T-cell (primary cell): ENCODE measurements at regions of chr1 and their contacts with region 1.

Region 1: DNA sequence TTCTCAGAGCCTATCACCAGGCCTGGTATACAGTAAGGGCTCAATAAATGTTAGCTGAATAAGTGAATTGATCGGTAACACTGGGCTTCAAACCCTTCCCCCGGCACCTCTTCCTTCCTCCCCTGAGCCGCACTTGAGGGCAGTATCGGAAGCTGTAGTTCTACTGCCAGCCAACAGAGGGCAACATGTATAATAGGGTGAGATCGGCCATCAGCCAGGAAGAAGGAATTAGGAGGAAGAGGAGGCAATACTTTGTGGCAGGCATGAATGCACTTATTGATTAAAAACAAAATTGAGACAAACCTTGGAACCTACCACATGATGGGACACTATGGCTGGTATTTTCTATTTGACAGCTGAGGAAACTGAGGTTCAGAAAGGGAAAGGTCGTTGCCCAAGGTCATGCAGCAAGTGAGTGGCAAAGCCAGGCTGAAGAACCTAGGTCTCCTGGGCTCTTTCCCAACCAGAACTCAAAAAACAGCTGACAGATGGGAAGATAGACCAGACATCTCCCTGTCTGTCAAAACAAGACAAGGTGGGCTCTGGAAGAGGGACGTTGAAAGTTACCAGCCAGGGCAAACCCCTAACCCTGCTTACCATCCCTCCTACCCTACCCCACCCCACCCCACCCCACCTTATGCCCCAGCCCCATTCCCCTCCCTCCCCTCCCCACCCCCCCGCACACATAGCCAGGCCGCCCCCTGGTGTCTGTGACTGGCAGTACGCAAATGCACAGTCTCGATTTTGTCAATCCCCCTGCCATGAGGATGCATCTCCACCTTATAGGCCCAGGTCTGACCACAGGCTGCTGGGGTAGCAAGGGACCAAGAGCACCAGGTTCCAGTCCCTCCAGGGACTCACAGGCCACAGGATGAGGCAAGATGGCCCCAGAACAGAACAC is 107.3 kb upstream of the RUNX3 start:
- DNase-seq: peak in 33 of 35 experiments; percentile 32 to 81 (median 58)
- ATAC-seq: peak; percentile 59 to 73 (median 64)
- H3K4me3 ChIP-seq: no peak overlapping the region
- H3K4me3 Mint-ChIP-seq: peak overlapping the region in 1 of 3 donors; percentile 21
- H3K27ac ChIP-seq: peak overlapping the region; percentile 28
- H3K27ac Mint-ChIP-seq: no peak overlapping the region
- H3K4me1 ChIP-seq: peaks cover 24 to 74% of the 10 kb centered on the region in 2 experiments
- H3K4me1 Mint-ChIP-seq: peaks cover 39 to 40% (median 40%) of the 10 kb centered on the region in 3 donors
- H3K27me3 ChIP-seq: peaks cover 0 to 4% of the 10 kb centered on the region in 2 experiments
- H3K27me3 Mint-ChIP-seq: no peaks in the 10 kb centered on the region

Region 2: DNA sequence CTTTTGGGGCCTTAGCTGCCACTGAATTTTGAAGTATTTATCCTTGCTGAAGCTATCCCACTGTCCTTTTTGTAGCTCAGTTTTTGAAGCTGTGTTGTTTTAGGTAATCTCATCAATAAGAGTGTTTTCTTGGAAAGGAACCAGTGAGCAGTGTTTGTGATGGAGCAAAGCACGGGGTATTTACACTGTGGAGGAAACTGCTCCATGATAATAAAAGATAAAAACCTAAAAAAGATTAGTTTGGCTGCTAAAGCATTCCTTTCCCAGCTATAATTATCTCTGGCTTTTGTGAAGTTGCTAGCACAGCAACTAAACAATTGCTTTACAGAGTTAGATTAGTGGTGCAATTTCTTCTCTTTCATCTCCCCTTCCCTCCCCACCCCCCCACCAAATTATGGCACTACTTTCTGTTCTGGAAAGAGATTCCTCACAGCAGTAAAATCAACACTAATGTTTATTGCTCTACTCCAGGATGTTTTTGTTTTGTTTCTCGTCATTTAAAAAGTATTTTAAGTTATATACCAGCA is 372.9 kb before region 1 on chr1:
- CTCF ChIA-PET with region 1: no interaction called
- POLR2A ChIA-PET with region 1: no interaction called
- DNase-seq: no peak
- ATAC-seq: no peak
- H3K4me3 ChIP-seq: no peak overlapping the region
- H3K4me3 Mint-ChIP-seq: no peak overlapping the region
- H3K27ac ChIP-seq: no peak overlapping the region
- H3K27ac Mint-ChIP-seq: no peak overlapping the region
- H3K4me1 ChIP-seq: no peaks in the 10 kb centered on the region
- H3K4me1 Mint-ChIP-seq: peaks cover 5 to 6% (median 6%) of the 10 kb centered on the region in 3 donors
- H3K27me3 ChIP-seq: no peaks in the 10 kb centered on the region
- H3K27me3 Mint-ChIP-seq: no peaks in the 10 kb centered on the region

Region 3: DNA sequence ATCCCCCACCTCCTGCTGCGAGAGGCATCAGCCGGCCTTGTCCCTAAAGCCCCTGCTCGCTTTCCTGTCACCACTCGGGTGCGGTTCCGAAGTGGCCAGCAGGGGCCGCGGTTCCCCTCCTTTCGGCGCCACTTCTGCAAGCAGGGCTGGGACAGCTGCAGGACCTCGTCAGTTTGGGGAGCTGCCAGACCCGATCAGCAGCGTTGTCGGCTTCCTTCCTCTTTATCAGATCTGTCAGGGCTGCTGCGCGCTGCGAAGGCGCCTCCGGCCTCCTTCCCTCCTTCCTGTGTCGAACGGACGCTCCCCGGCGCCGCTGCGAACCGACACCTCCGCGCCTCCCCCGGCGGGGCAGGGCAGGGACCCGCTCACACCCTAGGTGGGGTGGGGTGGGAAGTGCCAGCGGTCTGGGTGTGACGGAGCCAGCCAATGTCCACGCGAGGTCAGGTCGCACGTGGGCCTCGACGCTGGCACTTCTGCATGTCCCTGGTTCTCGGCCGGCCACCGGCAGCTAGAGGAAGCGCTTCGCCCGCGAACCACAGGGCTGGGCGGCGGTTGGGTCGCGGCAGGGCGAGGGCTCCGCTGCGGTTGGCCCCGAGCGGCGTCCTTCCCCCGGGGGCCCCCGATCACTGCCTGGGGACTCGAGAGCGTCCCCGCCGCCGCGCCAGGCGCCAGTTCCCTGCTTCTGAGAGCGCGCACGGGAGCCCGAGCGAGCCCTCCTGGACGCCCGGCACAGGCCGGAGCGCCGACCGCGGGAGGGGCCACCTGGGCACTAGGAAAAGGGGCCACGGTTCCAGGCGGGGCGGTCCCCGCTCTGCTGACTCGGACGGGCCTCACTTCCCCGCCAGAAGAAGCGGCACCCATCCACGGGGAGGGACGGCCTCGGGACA is 189.2 kb before region 1 on chr1:
- CTCF ChIA-PET with region 1: interaction called in 1 of 2 experiments, 24 read pairs
- POLR2A ChIA-PET with region 1: no interaction called
- DNase-seq: peak; percentile 79 to 94 (median 86)
- ATAC-seq: peak; percentile 94 to 97 (median 96)
- H3K4me3 ChIP-seq: peak overlapping the region; percentile 49 to 51
- H3K4me3 Mint-ChIP-seq: peak overlapping the region; percentile 57 to 74 (median 71)
- H3K27ac ChIP-seq: peak overlapping the region; percentile 65
- H3K27ac Mint-ChIP-seq: peak overlapping the region; percentile 58 to 74
- H3K4me1 ChIP-seq: peaks cover 2 to 28% of the 10 kb centered on the region in 2 experiments
- H3K4me1 Mint-ChIP-seq: peaks cover 14 to 18% (median 18%) of the 10 kb centered on the region in 3 donors
- H3K27me3 ChIP-seq: no peaks in the 10 kb centered on the region
- H3K27me3 Mint-ChIP-seq: no peaks in the 10 kb centered on the region

Region 4: GRCh38 chr1:24930204-24931145 is 106.9 kb before region 1 on chr1 and contains the start of gene RUNX3:
- CTCF ChIA-PET with region 1: interaction called, 5 to 13 read pairs
- POLR2A ChIA-PET with region 1: interaction called, 3 read pairs
- DNase-seq: peak; percentile 85 to 96 (median 92)
- ATAC-seq: peak; percentile 80 to 87 (median 82)
- H3K4me3 ChIP-seq: peak within 1 kb of the TSS; percentile 87 to 97
- H3K4me3 Mint-ChIP-seq: peak within 1 kb of the TSS; percentile 96 to 98 (median 98)
- H3K27ac ChIP-seq: peak within 1 kb of the TSS; percentile 96
- H3K27ac Mint-ChIP-seq: peak within 1 kb of the TSS; percentile 89 to 96
- H3K4me1 ChIP-seq: peaks cover 32 to 72% of the 10 kb centered on the region in 2 experiments
- H3K4me1 Mint-ChIP-seq: peaks cover 44 to 63% (median 62%) of the 10 kb centered on the region in 3 donors
- H3K27me3 ChIP-seq: peaks cover 0 to 5% of the 10 kb centered on the region in 2 experiments
- H3K27me3 Mint-ChIP-seq: no peaks in the 10 kb centered on the region
- total RNA-seq, gene RUNX3: 140 to 220 (median 145) TPM

Region 5: DNA sequence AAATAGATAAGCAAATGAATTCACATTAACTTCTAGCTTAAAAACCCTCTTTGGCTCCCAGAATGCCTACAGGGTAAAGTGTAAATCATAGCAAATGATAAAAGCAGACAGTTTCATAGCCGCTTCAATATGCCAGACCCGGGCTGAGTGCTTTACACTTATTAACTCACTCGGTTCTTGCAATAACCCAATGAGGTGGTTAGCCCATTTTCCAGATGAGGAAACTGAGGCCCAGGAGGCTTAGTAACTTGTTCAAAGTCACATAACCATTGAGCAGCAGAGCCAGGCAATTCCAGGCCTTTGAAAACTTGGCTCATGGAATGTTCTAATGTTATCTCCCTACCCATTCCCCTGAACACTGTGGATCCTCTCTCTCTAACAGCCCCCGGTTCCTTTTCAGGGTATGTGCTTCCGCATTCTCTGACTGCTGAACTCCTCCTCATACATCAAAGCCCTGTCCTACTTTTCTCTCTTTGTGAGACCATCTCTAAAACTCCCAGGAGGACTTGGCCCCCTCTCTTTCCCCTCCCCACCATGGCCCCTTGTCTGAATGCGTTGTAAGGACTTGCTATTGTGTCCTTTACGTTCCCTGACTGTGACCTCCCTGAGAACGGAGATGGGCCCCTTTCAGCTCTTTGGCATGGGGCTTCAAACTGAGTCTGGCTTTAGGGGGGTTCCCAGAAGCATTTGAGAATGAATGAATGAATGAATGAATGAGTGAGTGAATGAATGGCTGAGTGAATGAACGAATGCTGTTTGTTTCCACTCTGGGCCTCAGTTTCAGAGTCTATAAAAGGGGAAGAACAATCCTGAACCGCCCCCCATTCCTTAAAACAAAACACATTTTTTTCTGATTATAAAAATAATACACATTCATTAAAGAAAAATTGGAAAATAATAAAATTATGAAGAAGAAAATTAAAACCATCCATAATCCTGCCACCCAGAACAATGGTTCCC is 91.8 kb before region 1 on chr1:
- CTCF ChIA-PET with region 1: no interaction called
- POLR2A ChIA-PET with region 1: no interaction called
- DNase-seq: no peak
- ATAC-seq: no peak
- H3K4me3 ChIP-seq: no peak overlapping the region
- H3K4me3 Mint-ChIP-seq: no peak overlapping the region
- H3K27ac ChIP-seq: no peak overlapping the region
- H3K27ac Mint-ChIP-seq: peak overlapping the region in 1 of 2 donors; percentile 28
- H3K4me1 ChIP-seq: peaks cover 0 to 37% of the 10 kb centered on the region in 2 experiments
- H3K4me1 Mint-ChIP-seq: peaks cover 19 to 34% (median 31%) of the 10 kb centered on the region in 3 donors
- H3K27me3 ChIP-seq: no peaks in the 10 kb centered on the region
- H3K27me3 Mint-ChIP-seq: no peaks in the 10 kb centered on the region

Region 6: GRCh38 chr1:25022361-25023189 is 14.8 kb before region 1 on chr1:
- CTCF ChIA-PET with region 1: interaction called in 1 of 2 experiments, 33 read pairs
- POLR2A ChIA-PET with region 1: no interaction called
- DNase-seq: peak; percentile 79 to 99 (median 96)
- ATAC-seq: peak; percentile 87 to 90 (median 88)
- H3K4me3 ChIP-seq: peak overlapping the region; percentile 39 to 41
- H3K4me3 Mint-ChIP-seq: peak overlapping the region; percentile 67 to 77 (median 70)
- H3K27ac ChIP-seq: peak overlapping the region; percentile 100
- H3K27ac Mint-ChIP-seq: peak overlapping the region; percentile 95 to 98
- H3K4me1 ChIP-seq: peaks cover 41 to 100% of the 10 kb centered on the region in 2 experiments
- H3K4me1 Mint-ChIP-seq: peaks cover 72 to 89% (median 89%) of the 10 kb centered on the region in 3 donors
- H3K27me3 ChIP-seq: no peaks in the 10 kb centered on the region
- H3K27me3 Mint-ChIP-seq: no peaks in the 10 kb centered on the region

Region 7: DNA sequence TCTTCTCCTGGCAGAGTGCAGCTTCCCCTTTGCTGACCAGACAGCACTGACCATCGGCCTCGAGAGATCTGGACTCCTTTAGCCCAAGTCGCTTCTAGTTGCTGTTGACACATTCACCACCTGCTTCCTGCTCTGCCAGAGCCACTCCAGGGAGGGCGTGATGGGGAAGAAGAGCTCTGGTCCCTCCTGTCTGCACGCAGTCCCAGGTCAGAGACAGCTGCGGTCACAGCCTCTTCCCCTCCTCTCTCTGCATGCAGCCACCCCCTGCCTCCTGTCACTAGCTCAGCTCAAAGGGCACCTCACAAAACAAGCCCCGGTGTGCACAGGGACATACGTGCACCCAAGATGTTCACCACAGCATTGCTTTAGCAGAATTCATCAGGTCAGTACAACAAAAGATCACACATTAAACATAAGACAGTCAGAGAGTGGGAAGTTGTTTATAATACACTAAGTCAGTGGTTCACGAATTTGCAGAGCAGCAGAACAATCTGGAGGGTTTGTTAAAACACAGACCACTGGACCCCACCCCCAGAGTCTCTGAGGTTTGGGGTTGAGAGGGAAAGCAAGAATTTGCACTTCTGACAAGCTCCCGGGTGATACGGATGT is 62.0 kb after region 1 on chr1:
- CTCF ChIA-PET with region 1: interaction called in 1 of 2 experiments, 11 read pairs
- POLR2A ChIA-PET with region 1: no interaction called
- DNase-seq: peak in 31 of 35 experiments; percentile 10 to 64 (median 33)
- ATAC-seq: peak; percentile 20 to 63 (median 60)
- H3K4me3 ChIP-seq: peak overlapping the region; percentile 3 to 30
- H3K4me3 Mint-ChIP-seq: peak overlapping the region; percentile 49 to 62 (median 56)
- H3K27ac ChIP-seq: peak overlapping the region; percentile 50
- H3K27ac Mint-ChIP-seq: peak overlapping the region; percentile 84 to 88
- H3K4me1 ChIP-seq: peaks cover 24 to 79% of the 10 kb centered on the region in 2 experiments
- H3K4me1 Mint-ChIP-seq: peaks cover 66 to 68% (median 67%) of the 10 kb centered on the region in 3 donors
- H3K27me3 ChIP-seq: peaks cover 0 to 8% of the 10 kb centered on the region in 2 experiments
- H3K27me3 Mint-ChIP-seq: no peaks in the 10 kb centered on the region

Region 8: DNA sequence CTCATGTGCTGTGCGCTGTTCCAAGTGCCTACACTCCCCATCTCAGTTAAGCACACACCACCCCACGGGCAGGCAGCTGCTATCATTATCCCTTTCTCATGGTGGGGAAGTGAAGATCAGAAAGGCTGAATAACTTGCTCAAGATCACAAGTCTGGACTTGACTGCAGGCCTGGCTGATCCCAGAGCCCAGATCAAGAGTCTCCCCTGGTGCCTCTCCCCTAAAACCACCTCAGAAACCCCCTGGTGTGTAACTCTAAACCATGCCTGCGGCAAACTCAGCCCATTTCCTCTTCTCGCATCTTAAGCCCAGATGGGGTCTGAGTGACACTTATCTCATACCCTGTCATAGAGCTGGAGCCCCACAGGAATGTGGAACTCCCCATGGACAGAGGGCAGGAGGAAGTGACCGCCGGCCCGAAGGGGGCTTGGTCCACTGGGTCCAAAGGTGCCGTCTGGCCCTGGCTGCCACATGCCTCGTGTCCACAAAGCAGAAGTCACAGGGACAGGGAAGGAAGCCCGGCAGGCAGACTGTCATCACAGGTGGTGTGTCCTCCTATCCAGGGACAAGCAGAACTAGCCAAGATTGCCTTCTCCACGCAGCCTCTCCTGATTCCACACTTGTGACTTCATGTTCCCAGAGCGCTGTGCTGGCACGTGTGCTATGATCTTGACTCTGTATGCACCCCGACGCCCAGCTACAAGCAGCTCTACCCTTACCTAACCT is 102.8 kb after region 1 on chr1:
- CTCF ChIA-PET with region 1: no interaction called
- POLR2A ChIA-PET with region 1: no interaction called
- DNase-seq: peak in 3 of 35 experiments; percentile 2 to 26 (median 16)
- ATAC-seq: peak in 1 of 4 experiments; percentile 43
- H3K4me3 ChIP-seq: no peak overlapping the region
- H3K4me3 Mint-ChIP-seq: no peak overlapping the region
- H3K27ac ChIP-seq: no peak overlapping the region
- H3K27ac Mint-ChIP-seq: no peak overlapping the region
- H3K4me1 ChIP-seq: no peaks in the 10 kb centered on the region
- H3K4me1 Mint-ChIP-seq: peaks cover 0 to 4% (median 0%) of the 10 kb centered on the region in 3 donors
- H3K27me3 ChIP-seq: peaks cover 0 to 28% of the 10 kb centered on the region in 2 experiments
- H3K27me3 Mint-ChIP-seq: peaks cover 24 to 41% of the 10 kb centered on the region in 2 donors